Endothelial cell of umbilical vein (primary cell): ENCODE measurements at regions of chr11 and their contacts with region 1.

Region 1: GRCh38 chr11:78139422-78140391 is at the start of gene ALG8:
- DNase-seq: peak; percentile 99
- H3K4me3 ChIP-seq: peak within 1 kb of the TSS; percentile 52 to 84 (median 69)
- H3K27ac ChIP-seq: peak within 1 kb of the TSS; percentile 60
- H3K4me1 ChIP-seq: peaks cover 15% of the 10 kb centered on the region
- H3K27me3 ChIP-seq: no peaks in the 10 kb centered on the region
- CTCF ChIP-seq: no peak
- POLR2A ChIP-seq: peak; percentile 89
- total RNA-seq, gene ALG8: 38.1 and 43.9 TPM in 2 replicates

Region 2: GRCh38 chr11:78188286-78189173 is 48.8 kb after region 1 on chr11 and contains the starts of genes KCTD21 and USP35:
- CTCF ChIA-PET with region 1: interaction called, 6 read pairs
- POLR2A ChIA-PET with region 1: interaction called, 5 read pairs
- dilution Hi-C with region 1: no loop called
- intact Hi-C with region 1: loop called (anchors 1 kb)
- DNase-seq: peak; percentile 98
- H3K4me3 ChIP-seq: peak within 1 kb of the TSS; percentile 68 to 81 (median 71)
- H3K27ac ChIP-seq: peak within 1 kb of the TSS; percentile 14
- H3K4me1 ChIP-seq: peaks cover 40% of the 10 kb centered on the region
- H3K27me3 ChIP-seq: no peaks in the 10 kb centered on the region
- CTCF ChIP-seq: no peak
- POLR2A ChIP-seq: peak; percentile 90
- total RNA-seq, gene KCTD21: 8.5 and 9.5 TPM in 2 replicates
- total RNA-seq, gene USP35: 10.3 and 12.4 TPM in 2 replicates

Region 3: GRCh38 chr11:78208257-78209165 is 68.8 kb after region 1 on chr11:
- CTCF ChIA-PET with region 1: no interaction called
- POLR2A ChIA-PET with region 1: no interaction called
- dilution Hi-C with region 1: no loop called
- intact Hi-C with region 1: loop called (anchors 5 kb)
- DNase-seq: no peak
- H3K4me3 ChIP-seq: no peak overlapping the region
- H3K27ac ChIP-seq: no peak overlapping the region
- H3K4me1 ChIP-seq: no peaks in the 10 kb centered on the region
- H3K27me3 ChIP-seq: no peaks in the 10 kb centered on the region
- CTCF ChIP-seq: no peak
- POLR2A ChIP-seq: no peak